Right cardiac atrium (tissue), 5 donors: ENCODE measurements at regions of chr17 and their contacts with region 1.

Region 1: GRCh38 chr17:7484067-7484918 is at the start of gene POLR2A:
- DNase-seq: peak; percentile 99 to 100 (median 100)
- ATAC-seq: peak; percentile 89 to 92
- H3K4me3 ChIP-seq: peak within 1 kb of the TSS; percentile 76
- H3K27ac ChIP-seq: peak within 1 kb of the TSS; percentile 100
- H3K4me1 ChIP-seq: peaks cover 9% of the 10 kb centered on the region
- H3K27me3 ChIP-seq: no peaks in the 10 kb centered on the region
- total RNA-seq, gene POLR2A: 41.9 to 51.4 (median 47.4) TPM

Region 2: GRCh38 chr17:7394452-7395191 is 89.7 kb before region 1 on chr17 and contains the start of gene PLSCR3:
- intact Hi-C with region 1: loop called in 1 of 4 experiments (anchors 5 kb)
- DNase-seq: peak; percentile 91 to 97 (median 96)
- ATAC-seq: peak; percentile 93 to 95
- H3K4me3 ChIP-seq: peak within 1 kb of the TSS; percentile 92
- H3K27ac ChIP-seq: peak within 1 kb of the TSS; percentile 98
- H3K4me1 ChIP-seq: no peaks in the 10 kb centered on the region
- H3K27me3 ChIP-seq: no peaks in the 10 kb centered on the region
- total RNA-seq, gene PLSCR3: 19.8 to 25.0 (median 22.9) TPM